Panc1 (cell line): ENCODE measurements at regions of chr2 and their contacts with region 1.

Region 1: GRCh38 chr2:101387151-101387807 is at the start of gene CREG2:
- DNase-seq: no peak
- ATAC-seq: peak; percentile 87
- H3K4me3 ChIP-seq: peak within 1 kb of the TSS; percentile 42 to 43
- H3K27ac ChIP-seq: no peak within 1 kb of the TSS
- H3K4me1 ChIP-seq: no peaks in the 10 kb centered on the region
- H3K27me3 ChIP-seq: peaks cover 30% of the 10 kb centered on the region
- CTCF ChIP-seq: peak; percentile 84
- total RNA-seq, gene CREG2: 0.21 TPM

Region 2: DNA sequence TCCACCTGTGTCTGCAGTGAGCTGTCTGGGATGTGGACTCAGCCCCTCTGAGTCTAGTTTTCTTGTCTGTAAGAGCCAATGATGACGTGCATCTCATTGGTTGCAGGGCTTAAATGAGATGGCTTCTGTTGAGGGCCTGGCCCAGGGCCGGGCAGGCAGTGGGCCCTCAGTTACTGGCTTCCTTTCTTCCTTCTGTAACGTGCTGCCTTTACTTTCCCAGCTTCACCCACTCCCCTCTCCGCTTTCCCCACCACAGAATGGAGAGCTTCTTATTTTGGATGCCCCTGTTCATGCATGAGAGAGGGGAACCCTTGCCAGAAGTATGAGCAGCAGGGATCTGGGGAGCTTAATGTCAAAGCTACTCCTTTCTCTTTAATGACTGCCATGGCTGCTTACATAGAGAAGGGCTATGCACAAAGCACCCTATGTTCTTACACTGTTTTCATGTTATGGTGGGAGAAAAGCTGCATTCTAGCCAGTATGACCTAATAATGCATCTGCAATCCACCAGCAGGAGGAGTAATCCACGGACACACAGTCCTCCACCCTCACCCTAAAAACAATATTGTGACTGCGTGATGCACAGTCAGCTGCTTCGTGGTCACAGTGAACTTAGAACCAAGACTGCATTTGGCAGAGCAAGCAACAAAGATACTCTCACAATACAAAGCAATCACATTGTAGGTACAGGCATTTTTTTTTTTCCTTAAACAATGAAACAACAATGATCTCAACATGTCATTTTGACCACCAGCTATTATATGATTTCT is 37.2 kb before region 1 on chr2:
- CTCF ChIA-PET with region 1: no interaction called
- POLR2A ChIA-PET with region 1: no interaction called
- in situ Hi-C with region 1: no loop called
- intact Hi-C with region 1: loop called (anchors 5 kb)
- DNase-seq: no peak
- ATAC-seq: peak; percentile 53; the same call in 1 of the 2 replicates
- H3K4me3 ChIP-seq: no peak overlapping the region
- H3K27ac ChIP-seq: no peak overlapping the region
- H3K4me1 ChIP-seq: no peaks in the 10 kb centered on the region
- H3K27me3 ChIP-seq: no peaks in the 10 kb centered on the region
- CTCF ChIP-seq: no peak

Region 3: GRCh38 chr2:101402630-101403029 is 15.4 kb after region 1 on chr2:
- CTCF ChIA-PET with region 1: interaction called, 10 read pairs
- POLR2A ChIA-PET with region 1: no interaction called
- in situ Hi-C with region 1: no loop called
- intact Hi-C with region 1: no loop called
- DNase-seq: no peak
- ATAC-seq: no peak
- H3K4me3 ChIP-seq: no peak overlapping the region
- H3K27ac ChIP-seq: no peak overlapping the region
- H3K4me1 ChIP-seq: no peaks in the 10 kb centered on the region
- H3K27me3 ChIP-seq: peaks cover 8% of the 10 kb centered on the region; the same call in 1 of the 2 replicates
- CTCF ChIP-seq: no peak